GM12878 (cell line): ENCODE measurements at regions of chr2 and their contacts with region 1.

Region 1: GRCh38 chr2:221517696-221518151 is 54.4 kb downstream of the EPHA4 start:
- DNase-seq: peak; percentile 57
- ATAC-seq: peak; percentile 85
- H3K4me3 ChIP-seq: no peak overlapping the region
- H3K27ac ChIP-seq: peak overlapping the region; percentile 39
- H3K4me1 ChIP-seq: peaks cover 27% of the 10 kb centered on the region
- H3K27me3 ChIP-seq: no peaks in the 10 kb centered on the region
- CTCF ChIP-seq: no peak
- EP300 ChIP-seq: peak; percentile 88 to 96
- POLR2A ChIP-seq: no peak
- RAD21 ChIP-seq: no peak

Region 2: GRCh38 chr2:221478485-221478863 is 39.2 kb before region 1 on chr2:
- CTCF ChIA-PET with region 1: no interaction called
- POLR2A ChIA-PET with region 1: no interaction called
- RAD21 ChIA-PET with region 1: no interaction called
- SMC1A ChIA-PET with region 1: no interaction called
- in situ Hi-C with region 1: no loop called
- intact Hi-C with region 1: no loop called
- DNase-seq: no peak
- ATAC-seq: no peak
- H3K4me3 ChIP-seq: no peak overlapping the region
- H3K27ac ChIP-seq: no peak overlapping the region
- H3K4me1 ChIP-seq: no peaks in the 10 kb centered on the region
- H3K27me3 ChIP-seq: no peaks in the 10 kb centered on the region
- CTCF ChIP-seq: no peak
- EP300 ChIP-seq: no peak
- POLR2A ChIP-seq: no peak
- RAD21 ChIP-seq: no peak

Region 3: DNA sequence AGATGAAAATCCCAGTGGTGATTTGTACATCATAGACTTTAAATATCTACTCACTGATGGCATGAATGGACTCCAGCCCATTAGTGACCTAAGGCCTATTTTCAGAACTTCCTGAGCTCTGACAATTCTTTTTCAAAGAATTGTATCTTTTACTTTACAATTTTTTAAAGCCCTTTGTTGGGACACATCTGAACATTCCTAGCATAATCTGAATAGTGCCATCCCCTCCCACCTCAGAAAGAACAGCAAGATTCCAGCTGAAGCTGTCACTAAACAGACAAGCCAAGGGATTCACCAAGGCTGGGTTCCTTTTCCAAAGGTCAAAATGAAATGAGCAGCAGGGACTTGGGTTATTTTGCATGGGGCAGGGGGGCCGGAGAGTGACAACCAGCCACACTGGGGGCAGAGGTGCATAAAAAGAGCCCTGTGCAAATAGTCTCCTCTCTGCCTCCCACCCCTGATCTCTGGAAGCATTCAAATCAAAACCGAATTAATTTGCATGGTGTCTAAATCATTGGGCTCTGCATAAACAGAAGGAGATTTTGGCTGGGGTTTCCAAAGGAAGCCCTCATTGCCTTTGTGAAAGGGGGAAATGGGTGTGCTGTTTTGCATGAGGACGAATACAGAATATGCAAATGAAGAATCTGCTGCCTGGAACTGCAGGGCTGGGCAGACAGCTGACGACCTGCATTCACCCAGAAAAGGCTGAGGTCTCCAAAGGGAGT is 37.2 kb after region 1 on chr2:
- CTCF ChIA-PET with region 1: interaction called, 4 read pairs
- POLR2A ChIA-PET with region 1: no interaction called
- RAD21 ChIA-PET with region 1: no interaction called
- SMC1A ChIA-PET with region 1: no interaction called
- in situ Hi-C with region 1: no loop called
- intact Hi-C with region 1: loop called (anchors 5 kb)
- DNase-seq: peak; percentile 50
- ATAC-seq: peak; percentile 91
- H3K4me3 ChIP-seq: 0 out of 2 replicates have a peak overlapping the region, but pooled peaks have one; percentile 34
- H3K27ac ChIP-seq: no peak overlapping the region
- H3K4me1 ChIP-seq: peaks cover 13% of the 10 kb centered on the region
- H3K27me3 ChIP-seq: no peaks in the 10 kb centered on the region
- CTCF ChIP-seq: no peak
- EP300 ChIP-seq: no peak
- POLR2A ChIP-seq: no peak
- RAD21 ChIP-seq: no peak